ENCODE measurements at regions of chr3 and their contacts with region 1.

Region 1: DNA sequence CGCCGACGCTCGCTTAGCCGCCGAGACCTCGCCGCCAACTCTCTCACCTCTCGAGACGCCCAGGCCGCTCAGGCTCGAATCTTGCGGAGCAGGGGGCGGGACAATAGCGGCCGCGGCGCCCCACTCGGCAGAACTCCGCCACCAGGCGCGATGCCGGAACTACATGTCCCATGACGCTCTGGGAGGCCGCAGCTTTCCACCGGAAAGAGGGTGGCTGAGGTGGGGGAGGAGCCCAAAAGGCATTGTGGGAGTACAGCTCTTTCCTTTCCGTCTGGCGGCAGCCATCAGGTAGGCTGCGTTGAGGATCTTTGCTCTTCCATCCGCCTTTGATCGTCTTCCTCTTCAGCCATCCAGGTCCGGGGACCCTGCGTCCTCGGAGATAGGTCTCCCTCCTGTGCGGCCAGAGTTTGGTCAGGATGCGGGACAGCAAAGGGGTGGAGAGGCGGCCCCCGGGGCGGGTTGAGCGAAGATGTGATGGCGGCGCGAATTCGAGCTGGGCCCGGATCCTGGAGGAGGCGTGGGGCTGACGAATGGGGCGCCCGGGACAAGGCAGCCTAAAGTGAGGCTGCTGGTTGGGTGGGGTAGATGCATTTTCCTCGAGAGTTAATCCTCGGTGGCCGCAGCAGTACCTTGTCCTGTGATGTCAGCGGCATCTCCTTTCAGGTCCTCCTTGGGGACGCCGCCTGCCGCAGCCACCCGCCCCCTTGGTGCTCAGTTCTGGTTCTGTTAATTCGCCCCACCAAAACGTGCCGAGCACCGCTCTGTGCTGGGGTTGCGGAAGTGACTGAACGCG is at the starts of genes NKIRAS1 and RPL15:
- DNase-seq: peak; percentile 94 to 99 (median 96)

Region 2: DNA sequence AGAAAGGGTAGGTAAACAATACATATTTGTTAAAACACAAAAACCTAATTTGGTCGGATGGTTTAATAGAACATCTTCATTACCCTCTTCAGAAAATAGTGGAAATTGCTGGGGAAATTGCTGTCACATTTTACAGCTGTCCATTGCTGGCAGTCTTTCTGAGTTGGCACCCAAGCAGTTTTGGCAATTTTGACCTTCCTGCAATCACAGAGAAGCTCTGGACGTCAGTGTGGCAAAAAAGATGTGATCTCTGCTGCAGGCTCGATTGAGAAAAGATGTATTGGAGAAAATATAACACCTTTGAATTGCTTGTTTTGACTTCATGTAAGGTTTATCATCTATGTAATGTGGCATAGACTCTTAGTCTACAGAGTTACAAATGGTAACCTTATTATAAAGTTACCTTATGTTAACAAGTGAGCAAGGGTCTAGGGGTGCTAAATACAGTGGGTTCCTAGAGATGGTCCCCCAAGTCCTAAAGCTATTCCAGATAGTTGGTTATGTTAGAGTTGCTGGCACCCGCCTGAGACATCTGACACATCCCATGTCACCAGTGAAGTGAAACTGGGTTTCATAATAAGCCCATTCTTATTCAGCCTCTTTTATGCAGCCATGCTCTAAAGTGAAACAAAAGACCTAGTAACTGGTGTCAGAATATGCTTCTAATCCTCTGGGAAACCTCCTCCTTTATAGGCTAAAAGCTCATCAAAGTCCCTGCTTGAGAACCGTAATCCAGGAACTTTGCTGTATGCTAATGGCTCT is 97.3 kb before region 1 on chr3:
- intact Hi-C with region 1: no loop called
- DNase-seq: peak in 5 of 10 donors; percentile 25 to 89 (median 53)

Region 3: DNA sequence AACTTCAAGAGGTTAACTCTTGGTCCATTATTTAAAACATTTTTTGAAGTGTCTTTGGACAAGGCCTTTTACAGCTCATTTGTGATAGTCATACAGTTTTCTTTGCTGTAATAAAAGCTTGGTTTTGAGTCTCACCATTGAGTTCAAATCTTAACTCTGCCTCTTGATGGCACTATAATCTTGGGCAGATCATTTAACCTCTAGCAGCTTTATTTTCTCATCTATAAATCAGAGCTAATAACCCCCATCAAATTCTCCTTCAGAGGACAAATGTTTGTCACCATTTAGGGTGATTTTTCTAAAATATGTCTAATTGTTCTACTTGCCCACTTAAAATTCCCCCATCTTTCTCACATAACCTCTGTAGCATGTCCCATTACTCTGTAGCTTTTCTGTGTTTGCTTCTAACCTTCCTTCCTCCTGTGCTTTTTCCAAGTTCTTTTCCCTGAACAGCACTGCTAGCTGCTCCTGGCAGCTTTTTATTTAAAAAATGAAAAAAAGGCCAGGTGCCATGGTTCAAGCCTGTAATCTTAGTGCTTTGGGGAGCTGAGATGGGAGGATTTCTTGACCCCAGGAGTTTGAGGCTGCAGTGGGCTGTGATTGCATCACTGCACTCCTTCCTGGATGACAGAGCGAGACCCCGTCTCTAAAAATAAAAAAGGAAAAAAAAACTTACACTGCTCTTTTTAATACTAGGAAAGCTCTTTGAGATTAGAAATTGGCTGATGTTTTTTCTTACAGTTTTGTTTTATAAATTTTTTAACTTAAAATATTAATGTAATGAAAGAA is 82.8 kb before region 1 on chr3:
- intact Hi-C with region 1: loop called (anchors 10 kb)
- DNase-seq: no peak

Region 4: GRCh38 chr3:23845326-23846221 is 71.5 kb before region 1 on chr3:
- intact Hi-C with region 1: no loop called
- DNase-seq: no peak

Region 5: GRCh38 chr3:23991683-23992628 is 74.9 kb after region 1 on chr3:
- intact Hi-C with region 1: loop called (anchors 2 kb)
- DNase-seq: peak in 2 of 10 donors; percentile 31 to 61

Region 6: DNA sequence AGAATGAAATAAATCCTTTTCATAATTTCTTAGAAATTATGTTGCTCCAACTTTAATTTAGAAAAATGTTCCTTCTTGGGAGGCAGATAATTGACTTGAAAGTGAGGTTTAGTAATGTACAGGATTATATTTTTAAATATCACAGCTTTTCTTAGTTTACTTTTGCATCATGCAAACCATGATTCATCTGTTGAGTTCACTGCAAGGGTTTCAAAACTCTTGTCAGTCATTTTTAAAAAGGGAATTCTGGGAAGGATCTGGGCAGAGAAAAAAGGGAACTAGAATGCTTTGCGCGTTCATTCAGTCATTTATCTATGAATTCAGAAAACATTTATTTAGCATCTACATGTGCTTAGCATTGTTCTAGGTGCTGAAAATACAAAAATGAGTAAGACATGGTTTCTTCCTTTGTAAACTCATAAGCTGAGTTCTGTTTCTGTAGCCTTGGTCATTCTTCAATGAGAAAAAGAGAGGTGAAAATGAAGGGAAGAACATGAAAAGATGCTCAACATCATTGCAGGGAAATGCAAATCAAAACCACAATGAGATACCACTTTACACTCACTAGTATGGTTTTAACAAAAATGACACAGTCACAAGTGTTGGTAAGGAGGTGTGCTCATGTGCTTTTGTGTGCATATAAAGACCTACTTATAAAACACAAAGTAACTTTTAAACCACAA is 237.1 kb after region 1 on chr3:
- intact Hi-C with region 1: no loop called
- DNase-seq: no peak

Region 7: DNA sequence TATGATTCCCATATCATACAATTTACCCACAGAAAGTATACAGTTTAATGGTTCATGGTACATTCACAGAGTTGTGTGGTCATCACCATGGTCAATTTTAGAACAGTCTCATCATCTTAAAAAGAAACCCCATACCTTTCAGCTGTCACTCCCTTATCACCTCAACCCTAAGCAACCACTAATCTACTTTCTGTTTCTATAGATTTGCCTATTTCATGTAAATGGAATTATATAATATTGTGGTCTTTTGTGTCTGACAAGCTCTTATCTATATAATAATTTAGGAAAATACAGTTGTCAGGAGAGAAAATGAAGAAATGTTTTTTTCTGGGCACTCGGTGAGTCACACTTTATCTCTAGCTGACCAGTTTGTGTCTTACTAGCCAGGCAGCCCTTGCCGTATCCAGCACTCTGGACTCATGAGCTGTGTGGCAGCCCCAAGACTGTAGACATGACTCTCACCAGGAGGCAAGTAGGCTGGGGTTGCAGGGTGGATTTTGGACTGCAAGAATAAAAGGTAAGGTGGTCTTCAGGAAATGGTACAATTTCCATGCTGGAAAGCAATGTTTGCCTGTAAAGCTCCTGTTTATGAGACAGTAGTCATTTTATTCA is 342.9 kb after region 1 on chr3:
- intact Hi-C with region 1: no loop called
- DNase-seq: no peak

Measured in posterior cingulate gyrus (tissue), 11 donors.